Endothelial cell of umbilical vein (primary cell): ENCODE measurements at regions of chr22 and their contacts with region 1.

Region 1: DNA sequence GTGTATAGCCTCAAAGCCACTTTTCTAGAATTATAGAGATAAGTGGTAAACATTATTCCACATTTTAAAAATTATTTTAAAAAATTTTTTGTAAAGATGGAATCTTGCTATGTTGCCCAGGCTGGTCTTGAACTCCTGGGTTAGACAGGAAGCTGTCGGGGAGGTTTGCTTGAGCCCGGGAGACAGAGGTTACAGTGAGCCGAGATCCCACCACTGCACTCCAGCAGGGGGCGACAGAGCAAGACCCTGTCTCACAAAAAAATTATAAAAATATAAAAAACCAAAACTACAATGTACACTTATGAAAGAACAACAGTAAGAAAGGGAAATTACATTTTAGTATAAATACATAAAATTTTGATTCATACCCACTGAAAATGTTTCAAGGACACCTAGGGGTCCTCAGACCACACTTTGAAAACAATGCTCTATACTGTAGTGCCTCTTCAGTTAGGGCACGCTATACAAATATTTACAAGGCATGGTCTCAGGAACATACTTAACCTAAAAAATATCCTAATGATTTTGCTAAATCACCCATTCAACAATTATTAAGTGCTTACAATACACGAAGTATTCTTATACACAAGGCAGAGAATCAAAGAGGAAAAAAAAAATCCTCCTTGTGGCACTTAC is 111.2 kb downstream of the MRTFA start:
- DNase-seq: peak; percentile 65
- H3K4me3 ChIP-seq: no peak overlapping the region
- H3K27ac ChIP-seq: no peak overlapping the region
- H3K4me1 ChIP-seq: peaks cover 2% of the 10 kb centered on the region
- H3K27me3 ChIP-seq: no peaks in the 10 kb centered on the region
- CTCF ChIP-seq: peak; percentile 81 to 84
- POLR2A ChIP-seq: no peak

Region 2: GRCh38 chr22:40418366-40419201 is 106.8 kb before region 1 on chr22:
- CTCF ChIA-PET with region 1: no interaction called
- POLR2A ChIA-PET with region 1: no interaction called
- dilution Hi-C with region 1: no loop called
- intact Hi-C with region 1: no loop called
- DNase-seq: no peak
- H3K4me3 ChIP-seq: no peak overlapping the region
- H3K27ac ChIP-seq: no peak overlapping the region
- H3K4me1 ChIP-seq: no peaks in the 10 kb centered on the region
- H3K27me3 ChIP-seq: no peaks in the 10 kb centered on the region
- CTCF ChIP-seq: no peak
- POLR2A ChIP-seq: no peak

Region 3: GRCh38 chr22:40512426-40513136 is 12.8 kb before region 1 on chr22:
- CTCF ChIA-PET with region 1: interaction called, 21 read pairs
- POLR2A ChIA-PET with region 1: no interaction called
- dilution Hi-C with region 1: no loop called
- intact Hi-C with region 1: no loop called
- DNase-seq: no peak
- H3K4me3 ChIP-seq: no peak overlapping the region
- H3K27ac ChIP-seq: no peak overlapping the region
- H3K4me1 ChIP-seq: no peaks in the 10 kb centered on the region
- H3K27me3 ChIP-seq: no peaks in the 10 kb centered on the region
- CTCF ChIP-seq: no peak
- POLR2A ChIP-seq: no peak

Region 4: GRCh38 chr22:40636380-40637182 is 111.2 kb after region 1 on chr22 and contains the start of gene MRTFA:
- CTCF ChIA-PET with region 1: interaction called, 29 read pairs
- POLR2A ChIA-PET with region 1: no interaction called
- dilution Hi-C with region 1: loop called (anchors 10 kb)
- intact Hi-C with region 1: loop called (anchors 2 kb)
- DNase-seq: peak; percentile 100
- H3K4me3 ChIP-seq: peak within 1 kb of the TSS; percentile 72 to 88 (median 87)
- H3K27ac ChIP-seq: peak within 1 kb of the TSS; percentile 69
- H3K4me1 ChIP-seq: peaks cover 21% of the 10 kb centered on the region
- H3K27me3 ChIP-seq: no peaks in the 10 kb centered on the region
- CTCF ChIP-seq: no peak
- POLR2A ChIP-seq: peak; percentile 81
- total RNA-seq, gene MRTFA: 44.1 and 48.6 TPM in 2 replicates

Region 5: GRCh38 chr22:40645579-40646197 is 120.3 kb after region 1 on chr22:
- CTCF ChIA-PET with region 1: interaction called, 83 read pairs
- POLR2A ChIA-PET with region 1: no interaction called
- dilution Hi-C with region 1: loop called (anchors 10 kb)
- intact Hi-C with region 1: loop called (anchors 1 kb)
- DNase-seq: no peak
- H3K4me3 ChIP-seq: no peak overlapping the region
- H3K27ac ChIP-seq: no peak overlapping the region
- H3K4me1 ChIP-seq: peaks cover 6% of the 10 kb centered on the region
- H3K27me3 ChIP-seq: no peaks in the 10 kb centered on the region
- CTCF ChIP-seq: no peak
- POLR2A ChIP-seq: no peak

Region 6: DNA sequence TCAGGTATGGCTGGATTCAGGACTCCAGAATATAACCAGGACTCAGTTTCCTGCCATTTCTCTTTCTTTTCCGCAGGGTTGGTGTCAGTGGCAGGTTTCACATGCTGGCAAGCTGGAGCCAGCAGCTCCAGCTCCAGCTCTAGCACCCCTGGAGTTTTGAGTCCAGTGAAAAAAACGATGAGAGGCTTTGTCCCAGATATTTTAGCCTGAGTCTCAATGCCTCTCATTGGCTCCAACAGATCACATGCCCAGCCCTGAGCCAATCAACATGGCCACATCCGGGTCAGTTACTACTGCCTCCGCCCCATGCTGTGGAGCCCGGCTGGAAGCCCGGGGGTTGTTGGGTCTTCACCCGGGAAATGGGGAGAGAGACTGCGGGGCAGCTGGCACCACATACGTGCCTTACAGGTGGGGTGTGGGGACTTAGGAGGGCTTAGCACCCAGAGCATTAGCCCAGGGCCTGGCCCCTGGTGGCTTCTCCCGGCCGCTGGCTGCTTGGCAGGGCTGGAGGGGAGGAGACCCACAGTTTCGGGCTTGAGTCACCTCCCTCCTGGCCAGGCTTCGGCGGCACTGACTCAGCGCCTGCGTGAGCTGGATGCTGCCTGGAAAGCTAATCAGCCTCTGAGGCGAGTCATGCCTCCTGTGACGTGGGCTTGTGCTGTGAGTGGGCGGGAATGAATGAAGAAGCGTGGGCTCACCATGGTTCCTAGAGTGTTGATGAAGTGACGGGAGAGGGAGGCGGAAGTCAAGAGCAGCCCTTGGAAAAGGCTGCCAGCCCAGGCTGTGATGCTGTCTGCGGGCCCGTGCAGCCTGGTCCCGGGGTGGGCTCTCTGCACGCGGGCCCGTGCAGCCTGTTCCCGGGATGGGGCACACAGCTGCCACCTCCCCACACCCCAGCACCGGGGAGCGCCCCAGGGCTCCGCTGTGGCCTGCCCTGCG is 126.5 kb after region 1 on chr22:
- CTCF ChIA-PET with region 1: interaction called, 83 read pairs
- POLR2A ChIA-PET with region 1: no interaction called
- dilution Hi-C with region 1: loop called (anchors 10 kb)
- intact Hi-C with region 1: loop called (anchors 1 kb)
- DNase-seq: peak; percentile 98
- H3K4me3 ChIP-seq: peak overlapping the region in 2 of 3 experiments; percentile 49 to 64
- H3K27ac ChIP-seq: peak overlapping the region; percentile 88
- H3K4me1 ChIP-seq: peaks cover 14% of the 10 kb centered on the region
- H3K27me3 ChIP-seq: no peaks in the 10 kb centered on the region
- CTCF ChIP-seq: peak in 1 of 2 donors; percentile 6
- POLR2A ChIP-seq: peak; percentile 91